ENCODE measurements at regions of chr9 and their contacts with region 1.

Region 1: DNA sequence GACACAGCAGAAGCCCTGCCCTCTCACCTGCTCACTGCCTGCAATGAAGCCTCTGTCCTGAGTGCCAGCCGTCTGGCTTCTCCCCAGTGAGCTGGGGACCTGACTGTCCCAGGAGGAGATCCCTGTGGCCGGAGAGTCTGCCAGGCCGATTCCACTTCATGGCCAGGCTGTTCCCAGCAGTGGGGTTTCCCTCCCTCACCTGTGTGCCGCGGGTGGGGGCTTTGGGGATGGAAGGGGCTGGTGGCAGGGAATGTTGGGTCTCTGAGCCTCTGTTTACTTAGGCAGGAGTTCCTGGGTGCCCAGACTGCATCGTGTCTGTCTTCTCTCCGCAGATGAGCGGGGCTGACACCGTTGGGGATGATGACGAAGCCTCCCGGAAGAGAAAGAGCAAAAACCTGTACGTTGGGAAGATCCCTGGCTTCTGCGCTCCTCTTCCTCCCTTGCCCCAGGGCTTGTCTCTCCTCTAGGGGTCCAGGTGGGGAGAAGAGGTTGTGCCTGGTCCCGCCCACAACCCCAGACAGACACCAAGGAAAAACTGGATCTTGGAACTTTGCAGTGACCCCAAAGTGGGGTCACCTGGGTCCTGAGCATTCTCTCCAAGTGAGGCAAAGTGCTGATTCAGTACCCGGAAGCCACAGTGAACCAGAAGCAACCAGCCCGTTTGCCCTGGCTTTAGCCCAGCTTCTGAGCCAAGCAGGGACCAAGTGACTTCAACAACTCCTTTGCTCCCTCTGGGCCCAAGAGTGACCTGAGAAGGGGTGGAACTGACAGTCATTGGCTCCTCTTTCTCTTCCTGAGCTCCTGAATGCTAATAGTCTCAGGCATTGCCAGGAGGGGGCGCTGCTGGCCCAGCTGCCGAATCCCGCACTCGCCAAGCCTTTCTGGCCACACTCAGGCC is 127.7 kb downstream of the RGS3 start:
- DNase-seq: peak; percentile 83 to 87 (median 84)
- ATAC-seq: peak; percentile 40
- H3K4me3 ChIP-seq: no peak overlapping the region
- H3K27ac ChIP-seq: peak overlapping the region in 2 of 4 donors; percentile 15 to 43
- H3K4me1 ChIP-seq: peaks cover 67% of the 10 kb centered on the region
- H3K27me3 ChIP-seq: no peaks in the 10 kb centered on the region
- CTCF ChIP-seq: peak; percentile 71 to 95 (median 89)
- POLR2A ChIP-seq: no peak

Region 2: GRCh38 chr9:113446323-113446740 is 144.9 kb before region 1 on chr9:
- intact Hi-C with region 1: loop called (anchors 5 kb)
- DNase-seq: peak in 1 of 4 donors; percentile 12
- ATAC-seq: peak; percentile 74
- H3K4me3 ChIP-seq: no peak overlapping the region
- H3K27ac ChIP-seq: no peak overlapping the region
- H3K4me1 ChIP-seq: no peaks in the 10 kb centered on the region
- H3K27me3 ChIP-seq: no peaks in the 10 kb centered on the region
- CTCF ChIP-seq: peak; percentile 13 to 83 (median 69)
- POLR2A ChIP-seq: no peak

Region 3: DNA sequence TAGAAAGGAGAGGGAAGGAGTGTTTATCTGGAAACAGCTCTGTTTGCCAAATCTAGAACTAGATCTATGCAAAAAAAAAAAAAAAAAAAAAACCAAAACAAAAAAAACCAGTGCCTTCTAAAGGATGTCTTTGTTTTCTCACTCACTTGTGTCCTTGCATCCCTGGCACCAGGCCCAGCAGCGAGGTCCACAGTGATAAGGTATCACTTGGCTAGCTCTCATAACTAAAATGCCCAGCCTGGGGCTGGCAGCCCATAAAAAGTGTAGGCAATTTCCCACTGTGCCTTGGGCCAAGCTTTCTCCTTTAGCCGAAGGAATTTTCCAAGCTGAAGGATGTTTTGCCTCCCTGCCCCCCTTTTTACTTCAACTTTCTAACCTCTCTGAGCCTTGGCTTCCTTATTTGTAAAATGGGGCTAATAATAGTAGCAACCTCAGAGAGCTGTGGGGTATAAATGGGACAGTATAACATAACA is 107.0 kb before region 1 on chr9:
- intact Hi-C with region 1: no loop called
- DNase-seq: peak; percentile 76 to 92 (median 86)
- ATAC-seq: peak; percentile 81
- H3K4me3 ChIP-seq: no peak overlapping the region
- H3K27ac ChIP-seq: peak overlapping the region in 3 of 4 donors; percentile 55 to 70 (median 59)
- H3K4me1 ChIP-seq: peaks cover 34% of the 10 kb centered on the region
- H3K27me3 ChIP-seq: no peaks in the 10 kb centered on the region
- CTCF ChIP-seq: no peak
- POLR2A ChIP-seq: no peak

Region 4: GRCh38 chr9:113657703-113658544 is 66.7 kb after region 1 on chr9:
- intact Hi-C with region 1: loop called (anchors 5 kb)
- DNase-seq: peak; percentile 89 to 92 (median 92)
- ATAC-seq: peak; percentile 86
- H3K4me3 ChIP-seq: no peak overlapping the region
- H3K27ac ChIP-seq: no peak overlapping the region
- H3K4me1 ChIP-seq: peaks cover 6% of the 10 kb centered on the region
- H3K27me3 ChIP-seq: peaks cover 0 to 5% of the 10 kb centered on the region in 2 donors
- CTCF ChIP-seq: peak; percentile 89 to 98 (median 97)
- POLR2A ChIP-seq: no peak